ENCODE measurements at regions of chr9 and their contacts with region 1.

Region 1: GRCh38 chr9:70484210-70485130 is 70.0 kb upstream of the KLF9 start:
- DNase-seq: peak; percentile 56 to 69
- ATAC-seq: peak; percentile 63 to 64
- H3K4me3 ChIP-seq: no peak overlapping the region
- H3K27ac ChIP-seq: peak overlapping the region; percentile 97 to 99 (median 98)
- H3K4me1 ChIP-seq: peaks cover 82 to 90% of the 10 kb centered on the region in 2 donors
- H3K27me3 ChIP-seq: no peaks in the 10 kb centered on the region
- CTCF ChIP-seq: peak; percentile 79 to 86 (median 81)
- POLR2A ChIP-seq: peak in 1 of 2 donors; percentile 26

Region 2: DNA sequence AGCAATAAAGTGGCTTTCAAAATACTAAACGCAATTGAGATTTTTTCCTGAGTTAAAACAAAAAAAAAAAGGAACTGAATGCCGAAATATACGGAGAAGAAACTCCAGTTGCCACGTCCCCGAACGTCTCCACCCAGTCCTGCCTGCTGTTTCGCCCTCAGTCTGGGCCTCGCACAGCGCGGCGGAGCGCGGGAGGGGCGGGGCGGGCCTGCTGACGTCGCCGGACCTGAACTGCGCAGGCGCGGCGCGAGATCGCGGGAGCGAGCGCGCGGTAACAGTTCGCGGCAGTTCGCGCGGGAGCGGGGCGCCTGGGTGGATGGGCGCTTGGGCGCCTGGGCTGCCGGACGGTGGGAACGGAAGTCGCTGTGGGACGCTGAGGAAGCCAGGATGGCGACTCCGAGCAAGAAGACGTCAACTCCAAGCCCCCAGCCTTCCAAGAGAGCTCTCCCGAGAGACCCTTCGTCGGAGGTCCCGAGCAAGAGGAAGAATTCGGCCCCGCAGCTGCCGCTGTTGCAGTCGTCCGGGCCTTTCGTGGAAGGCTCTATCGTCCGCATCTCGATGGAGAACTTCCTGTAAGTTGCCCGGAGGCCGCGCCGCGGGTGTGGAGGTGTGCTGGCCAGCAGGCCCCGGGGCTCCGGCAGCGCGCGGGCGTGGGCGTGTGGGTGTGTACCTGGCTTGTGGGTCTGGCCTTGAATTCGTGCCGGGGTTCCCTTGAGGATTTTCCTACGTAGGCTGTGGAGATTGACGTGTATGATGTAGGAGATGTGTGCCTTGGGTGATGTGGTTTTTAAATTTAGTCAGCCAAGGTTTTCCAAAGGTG is 225.6 kb before region 1 on chr9 and contains the start of gene SMC5:
- in situ Hi-C with region 1: no loop called
- intact Hi-C with region 1: loop called (anchors 5 kb)
- DNase-seq: peak; percentile 75 to 85
- ATAC-seq: peak; percentile 90 to 91
- H3K4me3 ChIP-seq: peak within 1 kb of the TSS; percentile 66 to 97 (median 90)
- H3K27ac ChIP-seq: peak within 1 kb of the TSS; percentile 87 to 95 (median 94)
- H3K4me1 ChIP-seq: peaks cover 39 to 43% of the 10 kb centered on the region in 2 donors
- H3K27me3 ChIP-seq: no peaks in the 10 kb centered on the region
- CTCF ChIP-seq: no peak
- POLR2A ChIP-seq: peak; percentile 96
- total RNA-seq, gene SMC5: 16.2 to 250 (median 20.5) TPM

Region 3: DNA sequence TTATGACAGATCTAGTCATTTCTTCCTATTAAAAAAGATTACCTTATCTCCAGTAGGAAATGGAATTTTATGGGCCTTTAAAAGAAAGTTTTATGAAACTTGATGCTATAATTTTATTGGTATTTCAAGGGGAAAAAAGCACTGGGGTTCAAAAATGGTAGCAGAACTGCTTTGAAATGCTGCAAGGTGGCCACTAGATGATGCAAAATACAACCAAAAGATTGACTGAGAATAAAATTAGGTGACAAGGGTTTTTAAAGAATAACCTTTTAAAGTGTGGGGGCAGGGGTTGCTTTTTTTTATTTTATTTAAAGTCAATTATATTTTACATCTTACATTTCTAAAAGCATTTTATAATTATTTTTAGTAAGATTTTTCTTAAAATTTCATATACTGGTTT is 131.7 kb before region 1 on chr9:
- in situ Hi-C with region 1: loop called in 1 of 4 experiments (anchors 10 kb)
- intact Hi-C with region 1: loop called (anchors 2 kb)
- DNase-seq: no peak
- ATAC-seq: peak; percentile 47 to 68
- H3K4me3 ChIP-seq: no peak overlapping the region
- H3K27ac ChIP-seq: peak overlapping the region in 3 of 4 donors; percentile 16 to 43 (median 18)
- H3K4me1 ChIP-seq: peaks cover 0 to 16% of the 10 kb centered on the region in 2 donors
- H3K27me3 ChIP-seq: no peaks in the 10 kb centered on the region
- CTCF ChIP-seq: peak; percentile 35 to 79 (median 65)
- POLR2A ChIP-seq: no peak

Region 4: GRCh38 chr9:70419546-70420266 is 64.8 kb before region 1 on chr9:
- in situ Hi-C with region 1: loop called (anchors 5 kb)
- intact Hi-C with region 1: loop called (anchors 1 kb)
- DNase-seq: peak; percentile 97 to 98
- ATAC-seq: peak; percentile 42 to 48
- H3K4me3 ChIP-seq: peak overlapping the region; percentile 54 to 62 (median 56)
- H3K27ac ChIP-seq: peak overlapping the region; percentile 92 to 100 (median 100)
- H3K4me1 ChIP-seq: peaks cover 69 to 70% of the 10 kb centered on the region in 2 donors
- H3K27me3 ChIP-seq: no peaks in the 10 kb centered on the region
- CTCF ChIP-seq: peak in 1 of 5 experiments; percentile 5
- POLR2A ChIP-seq: no peak

Region 5: GRCh38 chr9:70595211-70595610 is 110.7 kb after region 1 on chr9:
- in situ Hi-C with region 1: loop called (anchors 5 to 10 kb)
- intact Hi-C with region 1: loop called (anchors 2 kb)
- DNase-seq: no peak
- ATAC-seq: peak; percentile 32 to 37
- H3K4me3 ChIP-seq: no peak overlapping the region
- H3K27ac ChIP-seq: peak overlapping the region in 3 of 4 donors; percentile 48 to 64 (median 56)
- H3K4me1 ChIP-seq: peaks cover 10 to 15% of the 10 kb centered on the region in 2 donors
- H3K27me3 ChIP-seq: no peaks in the 10 kb centered on the region
- CTCF ChIP-seq: no peak
- POLR2A ChIP-seq: no peak

Measured in gastrocnemius medialis (tissue), 4 donors.